Caco-2 (cell line): ENCODE measurements at regions of chr3 and their contacts with region 1.

Region 1: GRCh38 chr3:16332904-16333426 is 68.0 kb downstream of the OXNAD1 start:
- DNase-seq: peak in 1 of 2 experiments; percentile 30
- H3K4me3 ChIP-seq: no peak overlapping the region
- H3K4me3 Mint-ChIP-seq: no peak overlapping the region
- H3K27ac Mint-ChIP-seq: no peak overlapping the region
- H3K4me1 ChIP-seq: peaks cover 16% of the 10 kb centered on the region; the same call in 1 of the 2 replicates
- H3K4me1 Mint-ChIP-seq: peaks cover 14% of the 10 kb centered on the region
- H3K27me3 ChIP-seq: no peaks in the 10 kb centered on the region
- H3K27me3 Mint-ChIP-seq: no peaks in the 10 kb centered on the region
- CTCF ChIP-seq: no peak

Region 2: GRCh38 chr3:15905041-15905440 is 427.9 kb before region 1 on chr3:
- CTCF ChIA-PET with region 1: no interaction called
- POLR2A ChIA-PET with region 1: no interaction called
- intact Hi-C with region 1: no loop called
- DNase-seq: no peak
- H3K4me3 ChIP-seq: no peak overlapping the region
- H3K4me3 Mint-ChIP-seq: no peak overlapping the region
- H3K27ac Mint-ChIP-seq: no peak overlapping the region
- H3K4me1 ChIP-seq: no peaks in the 10 kb centered on the region
- H3K4me1 Mint-ChIP-seq: no peaks in the 10 kb centered on the region
- H3K27me3 ChIP-seq: no peaks in the 10 kb centered on the region
- H3K27me3 Mint-ChIP-seq: no peaks in the 10 kb centered on the region
- CTCF ChIP-seq: no peak

Region 3: GRCh38 chr3:16318176-16318575 is 14.8 kb before region 1 on chr3:
- CTCF ChIA-PET with region 1: no interaction called
- POLR2A ChIA-PET with region 1: no interaction called
- intact Hi-C with region 1: loop called (anchors 1 kb)
- DNase-seq: peak in 1 of 2 experiments; percentile 40
- H3K4me3 ChIP-seq: no peak overlapping the region
- H3K4me3 Mint-ChIP-seq: no peak overlapping the region
- H3K27ac Mint-ChIP-seq: peak overlapping the region; percentile 49
- H3K4me1 ChIP-seq: peaks cover 22% of the 10 kb centered on the region
- H3K4me1 Mint-ChIP-seq: no peaks in the 10 kb centered on the region
- H3K27me3 ChIP-seq: no peaks in the 10 kb centered on the region
- H3K27me3 Mint-ChIP-seq: no peaks in the 10 kb centered on the region
- CTCF ChIP-seq: no peak